GM12878 (cell line): ENCODE measurements at regions of chr17 and their contacts with region 1.

Region 1: DNA sequence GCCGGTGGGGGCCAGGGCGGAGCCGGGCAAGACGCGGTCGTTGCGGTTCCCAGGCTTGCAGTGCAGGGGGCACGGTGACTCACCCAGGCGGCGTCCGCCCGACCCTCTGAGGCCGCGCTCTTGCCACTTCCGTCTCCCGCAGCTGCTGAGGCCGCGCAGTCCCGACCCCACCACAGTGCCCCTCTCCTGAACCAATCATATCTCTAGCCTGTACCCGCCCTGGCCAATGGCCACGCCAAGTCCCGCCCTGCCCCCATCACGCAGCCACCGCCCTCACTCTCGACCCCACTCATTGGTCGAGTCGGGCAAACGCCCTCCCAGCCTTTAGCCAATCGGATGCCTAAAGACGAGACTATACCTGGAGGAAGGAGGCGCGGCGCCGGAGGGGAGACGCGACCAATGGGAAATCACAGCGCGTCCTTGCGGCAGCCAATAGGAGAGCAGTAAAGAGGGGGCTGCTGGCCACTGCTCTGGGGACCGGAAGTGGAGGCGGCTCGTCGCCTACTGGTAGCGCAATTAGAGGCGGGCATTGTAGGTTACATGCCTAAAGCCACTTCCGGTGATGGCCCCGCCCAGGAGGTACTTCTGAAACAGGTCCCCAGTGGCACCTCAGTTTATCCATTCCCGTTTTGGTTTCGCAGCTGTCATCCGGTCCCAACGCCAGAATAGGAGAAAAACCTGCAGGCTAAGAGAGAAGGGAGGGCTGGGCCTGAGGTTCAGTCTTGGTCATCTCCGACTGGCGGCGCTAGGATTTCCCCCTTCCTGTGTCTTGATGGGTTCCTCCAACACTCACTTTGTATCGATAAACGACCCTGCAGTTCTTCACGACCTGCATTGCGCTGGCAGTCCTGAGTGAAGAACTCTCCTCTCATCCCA is 3.5 kb upstream of the MTMR4 start:
- DNase-seq: peak; percentile 99
- ATAC-seq: peak; percentile 89
- H3K4me3 ChIP-seq: peak overlapping the region; percentile 99
- H3K27ac ChIP-seq: peak overlapping the region; percentile 93
- H3K4me1 ChIP-seq: peaks cover 19% of the 10 kb centered on the region
- H3K27me3 ChIP-seq: no peaks in the 10 kb centered on the region
- CTCF ChIP-seq: no peak
- EP300 ChIP-seq: peak in 1 of 2 experiments; percentile 44; a peak in 1 of 4 replicates
- POLR2A ChIP-seq: peak; percentile 86
- RAD21 ChIP-seq: no peak

Region 2: GRCh38 chr17:58344047-58344790 is 173.8 kb before region 1 on chr17:
- CTCF ChIA-PET with region 1: interaction called, 4 read pairs
- POLR2A ChIA-PET with region 1: no interaction called
- RAD21 ChIA-PET with region 1: interaction called, 3 read pairs
- SMC1A ChIA-PET with region 1: interaction called, 3 read pairs
- in situ Hi-C with region 1: no loop called
- intact Hi-C with region 1: loop called (anchors 5 kb)
- DNase-seq: peak; percentile 98
- ATAC-seq: peak; percentile 76
- H3K4me3 ChIP-seq: peak overlapping the region; percentile 81
- H3K27ac ChIP-seq: peak overlapping the region; percentile 100
- H3K4me1 ChIP-seq: peaks cover 53% of the 10 kb centered on the region
- H3K27me3 ChIP-seq: no peaks in the 10 kb centered on the region
- CTCF ChIP-seq: no peak
- EP300 ChIP-seq: peak; percentile 85 to 96
- POLR2A ChIP-seq: peak; percentile 79
- RAD21 ChIP-seq: peak; percentile 28; the same call in 1 of the 2 replicates

Region 3: GRCh38 chr17:58382108-58382871 is 135.7 kb before region 1 on chr17:
- CTCF ChIA-PET with region 1: no interaction called
- POLR2A ChIA-PET with region 1: no interaction called
- RAD21 ChIA-PET with region 1: no interaction called
- SMC1A ChIA-PET with region 1: no interaction called
- in situ Hi-C with region 1: no loop called
- intact Hi-C with region 1: no loop called
- DNase-seq: peak; percentile 44
- ATAC-seq: peak; percentile 90
- H3K4me3 ChIP-seq: no peak overlapping the region; the same call in 1 of the 2 replicates
- H3K27ac ChIP-seq: peak overlapping the region; percentile 42; the same call in 1 of the 2 replicates
- H3K4me1 ChIP-seq: peaks cover 19% of the 10 kb centered on the region
- H3K27me3 ChIP-seq: no peaks in the 10 kb centered on the region
- CTCF ChIP-seq: no peak
- EP300 ChIP-seq: no peak
- POLR2A ChIP-seq: no peak
- RAD21 ChIP-seq: no peak

Region 4: GRCh38 chr17:58565780-58566189 is 47.8 kb after region 1 on chr17:
- CTCF ChIA-PET with region 1: interaction called, 13 read pairs
- POLR2A ChIA-PET with region 1: no interaction called
- RAD21 ChIA-PET with region 1: no interaction called
- SMC1A ChIA-PET with region 1: no interaction called
- in situ Hi-C with region 1: no loop called
- intact Hi-C with region 1: no loop called
- DNase-seq: no peak
- ATAC-seq: no peak
- H3K4me3 ChIP-seq: no peak overlapping the region
- H3K27ac ChIP-seq: no peak overlapping the region
- H3K4me1 ChIP-seq: peaks cover 5% of the 10 kb centered on the region
- H3K27me3 ChIP-seq: no peaks in the 10 kb centered on the region
- CTCF ChIP-seq: no peak
- EP300 ChIP-seq: no peak
- POLR2A ChIP-seq: no peak
- RAD21 ChIP-seq: no peak

Region 5: DNA sequence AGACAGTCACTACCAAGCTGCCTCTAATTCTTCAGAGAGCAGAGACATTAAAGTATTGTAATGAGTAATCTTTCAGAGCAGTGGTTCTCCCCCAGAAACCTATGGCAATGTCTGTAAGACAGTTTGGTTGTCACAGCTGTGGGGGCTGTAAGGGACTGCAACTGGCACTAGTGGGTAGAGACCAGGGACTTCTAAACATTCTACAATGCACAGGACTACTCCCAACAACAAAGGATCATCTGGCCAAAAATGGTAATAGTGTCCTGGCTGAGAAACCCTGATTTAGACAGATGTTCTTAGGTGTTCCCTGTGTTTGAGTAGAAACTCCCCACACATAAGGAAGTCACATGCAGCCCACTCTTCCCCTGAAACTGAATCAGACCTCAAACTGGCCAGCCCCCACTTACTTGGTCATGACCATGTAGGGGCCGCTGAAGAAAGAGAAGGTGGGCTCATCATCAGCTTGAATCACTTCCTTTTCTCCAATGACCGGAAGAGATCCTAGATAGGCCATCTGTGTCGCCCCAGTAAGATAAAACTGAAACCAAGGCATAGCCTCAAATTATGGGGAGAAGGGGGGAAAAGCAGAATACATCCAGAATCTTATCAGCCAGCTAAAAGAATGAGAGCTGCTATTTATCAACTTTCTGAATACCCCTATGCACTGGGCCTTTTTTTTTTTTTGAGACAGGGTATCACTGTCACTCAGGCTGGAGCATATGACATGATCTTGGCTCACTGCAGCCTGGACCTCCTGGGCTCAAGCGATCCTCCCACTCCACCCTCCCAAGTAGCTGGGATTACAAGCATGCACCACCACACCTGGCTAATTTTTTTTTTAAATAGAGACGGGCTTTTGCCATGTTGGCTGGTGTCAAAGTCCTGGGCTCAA is 98.0 kb after region 1 on chr17:
- CTCF ChIA-PET with region 1: no interaction called
- POLR2A ChIA-PET with region 1: interaction called, 3 read pairs
- RAD21 ChIA-PET with region 1: interaction called, 3 read pairs
- SMC1A ChIA-PET with region 1: interaction called, 3 read pairs
- in situ Hi-C with region 1: no loop called
- intact Hi-C with region 1: loop called (anchors 5 kb)
- DNase-seq: peak; percentile 71
- ATAC-seq: peak; percentile 79
- H3K4me3 ChIP-seq: peak overlapping the region; percentile 28; the same call in 1 of the 2 replicates
- H3K27ac ChIP-seq: peak overlapping the region; percentile 83
- H3K4me1 ChIP-seq: peaks cover 63% of the 10 kb centered on the region
- H3K27me3 ChIP-seq: no peaks in the 10 kb centered on the region
- CTCF ChIP-seq: no peak
- EP300 ChIP-seq: 0 out of 4 replicates have a peak, but pooled peaks of 1 of the 2 experiments have one; percentile 31
- POLR2A ChIP-seq: no peak
- RAD21 ChIP-seq: no peak

Region 6: GRCh38 chr17:58703137-58703972 is 185.4 kb after region 1 on chr17:
- CTCF ChIA-PET with region 1: interaction called, 6 read pairs
- POLR2A ChIA-PET with region 1: interaction called, 3 read pairs
- RAD21 ChIA-PET with region 1: no interaction called
- SMC1A ChIA-PET with region 1: interaction called, 3 read pairs
- in situ Hi-C with region 1: no loop called
- intact Hi-C with region 1: loop called (anchors 2 kb)
- DNase-seq: no peak
- ATAC-seq: 0 out of 3 replicates have a peak, but pooled peaks have one; percentile 3
- H3K4me3 ChIP-seq: no peak overlapping the region
- H3K27ac ChIP-seq: peak overlapping the region; percentile 78; the same call in 1 of the 2 replicates
- H3K4me1 ChIP-seq: peaks cover 41% of the 10 kb centered on the region
- H3K27me3 ChIP-seq: no peaks in the 10 kb centered on the region
- CTCF ChIP-seq: no peak
- EP300 ChIP-seq: no peak
- POLR2A ChIP-seq: no peak
- RAD21 ChIP-seq: no peak